ENCODE measurements at regions of chr4 and their contacts with region 1.

Region 1: GRCh38 chr4:139177868-139178611 is 1.0 kb upstream of the ELF2 start:
- DNase-seq: peak; percentile 96 to 97
- H3K4me3 ChIP-seq: peak overlapping the region; percentile 92 to 96
- H3K27ac ChIP-seq: peak overlapping the region; percentile 100
- H3K4me1 ChIP-seq: peaks cover 19% of the 10 kb centered on the region
- H3K27me3 ChIP-seq: no peaks in the 10 kb centered on the region
- CTCF ChIP-seq: no peak
- POLR2A ChIP-seq: peak in 1 of 2 donors; percentile 79

Region 2: DNA sequence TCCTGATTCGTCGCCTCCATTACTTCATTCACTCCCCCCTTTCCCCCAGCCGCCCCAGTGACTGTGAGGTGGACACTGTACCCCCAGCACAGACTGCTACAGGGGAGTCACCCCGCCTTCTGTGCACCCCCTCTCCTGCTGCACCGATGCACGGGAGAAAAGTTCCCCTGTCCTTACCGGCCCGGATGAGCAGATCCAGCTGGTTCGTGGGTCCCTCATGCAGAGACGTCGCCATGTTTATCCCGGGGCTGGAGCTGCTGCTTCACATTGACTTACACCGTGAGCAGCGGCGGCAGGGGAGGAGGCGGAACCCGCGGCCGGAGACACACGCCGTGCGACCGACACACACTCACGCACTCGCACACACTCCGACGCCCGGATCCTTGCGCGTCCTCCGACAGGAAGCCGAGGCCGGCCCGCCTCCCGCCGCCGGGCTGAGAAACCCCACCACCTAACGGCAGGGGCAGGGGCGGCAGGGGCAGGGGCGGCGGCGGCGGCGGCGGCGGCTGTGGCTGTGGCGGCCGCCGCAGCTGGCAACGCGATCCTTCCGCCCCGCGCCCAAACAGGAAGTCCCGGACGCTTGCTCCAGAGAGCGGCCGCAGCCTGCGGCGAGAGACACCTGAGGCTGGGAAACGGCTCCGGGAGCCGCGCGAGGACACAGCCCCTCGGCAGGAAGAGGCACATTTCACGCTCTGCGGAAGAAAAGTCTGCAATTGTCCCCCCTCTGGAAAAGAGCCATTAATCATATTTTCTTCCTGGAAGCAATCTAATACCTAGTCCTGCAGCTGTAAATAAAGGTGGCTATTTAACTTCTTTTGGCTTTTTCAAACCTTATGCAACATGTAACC is 93.9 kb before region 1 on chr4:
- intact Hi-C with region 1: loop called (anchors 5 kb)
- DNase-seq: peak in 1 of 2 donors; percentile 93
- H3K4me3 ChIP-seq: peak overlapping the region; percentile 83 to 92
- H3K27ac ChIP-seq: peak overlapping the region; percentile 95
- H3K4me1 ChIP-seq: peaks cover 38% of the 10 kb centered on the region
- H3K27me3 ChIP-seq: no peaks in the 10 kb centered on the region
- CTCF ChIP-seq: peak in 1 of 3 experiments; percentile 8
- POLR2A ChIP-seq: peak in 1 of 2 donors; percentile 6

Region 3: GRCh38 chr4:139126898-139127297 is 51.1 kb before region 1 on chr4:
- intact Hi-C with region 1: no loop called
- DNase-seq: no peak
- H3K4me3 ChIP-seq: no peak overlapping the region
- H3K27ac ChIP-seq: no peak overlapping the region
- H3K4me1 ChIP-seq: no peaks in the 10 kb centered on the region
- H3K27me3 ChIP-seq: no peaks in the 10 kb centered on the region
- CTCF ChIP-seq: no peak
- POLR2A ChIP-seq: no peak

Region 4: GRCh38 chr4:139301113-139301820 is 123.2 kb after region 1 on chr4 and contains the start of gene NAA15:
- intact Hi-C with region 1: loop called (anchors 5 kb)
- DNase-seq: peak; percentile 97 to 98
- H3K4me3 ChIP-seq: peak within 1 kb of the TSS; percentile 68 to 94
- H3K27ac ChIP-seq: peak within 1 kb of the TSS; percentile 89
- H3K4me1 ChIP-seq: peaks cover 36% of the 10 kb centered on the region
- H3K27me3 ChIP-seq: no peaks in the 10 kb centered on the region
- CTCF ChIP-seq: no peak
- POLR2A ChIP-seq: peak in 1 of 2 donors; percentile 50
- total RNA-seq, gene NAA15: 35.1 TPM

Measured in vagina (tissue), 2 donors.